ENCODE measurements at regions of chr17 and their contacts with region 1.

Region 1: DNA sequence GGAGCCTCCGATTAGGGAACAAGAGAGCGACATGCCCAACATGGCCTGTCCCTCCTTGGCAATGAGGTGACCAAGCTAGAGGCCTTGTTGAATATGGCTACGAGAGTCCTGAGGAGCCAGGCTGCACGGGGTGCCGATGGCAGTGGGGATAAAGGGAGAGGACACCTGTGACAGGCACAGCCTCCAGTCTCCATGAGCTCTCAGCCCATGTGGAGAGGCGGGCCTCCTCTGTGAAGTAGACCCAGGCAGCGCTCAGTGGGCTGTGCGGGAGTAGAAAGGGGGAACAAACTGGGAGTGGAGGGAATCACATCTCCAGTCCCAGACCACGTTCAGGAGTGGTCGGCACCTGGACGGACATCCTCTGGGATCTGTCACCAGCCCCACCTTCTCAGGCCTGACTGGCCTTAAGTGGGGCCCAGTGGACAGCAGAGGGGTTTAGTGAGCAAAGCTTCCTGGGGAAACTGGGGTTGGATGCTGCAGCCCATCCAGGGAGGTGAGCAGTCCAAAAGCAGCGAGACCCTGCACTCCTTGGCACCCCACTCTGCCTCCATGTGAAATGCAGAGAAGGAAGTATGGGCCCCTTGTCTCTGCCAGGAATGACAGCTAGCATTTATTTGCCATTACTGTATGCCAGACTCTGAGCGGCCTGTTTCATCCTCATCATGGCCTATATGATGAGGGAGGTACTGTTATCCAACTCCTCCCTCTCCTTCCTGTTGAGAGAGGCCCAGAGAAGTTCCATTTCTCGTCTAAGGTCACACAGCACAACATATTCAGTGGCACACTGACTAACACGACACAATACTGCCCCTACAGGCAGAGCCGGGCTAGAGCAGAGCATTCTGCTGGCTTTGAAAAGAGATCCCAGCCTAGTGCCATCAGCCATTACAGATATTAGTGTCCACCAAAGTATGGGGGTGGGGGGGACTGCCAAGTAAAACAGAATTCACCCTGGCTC is 4.5 kb upstream of the TMEM92 start:
- DNase-seq: peak; percentile 80 to 86
- H3K4me3 ChIP-seq: no peak overlapping the region
- H3K4me3 Mint-ChIP-seq: no peak overlapping the region
- H3K27ac Mint-ChIP-seq: no peak overlapping the region
- H3K4me1 ChIP-seq: peaks cover 22% of the 10 kb centered on the region
- H3K4me1 Mint-ChIP-seq: peaks cover 14% of the 10 kb centered on the region
- H3K27me3 ChIP-seq: no peaks in the 10 kb centered on the region
- H3K27me3 Mint-ChIP-seq: no peaks in the 10 kb centered on the region
- CTCF ChIP-seq: peak; percentile 92 to 98

Region 2: GRCh38 chr17:50289991-50290702 is 20.4 kb after region 1 on chr17:
- CTCF ChIA-PET with region 1: interaction called, 15 read pairs
- POLR2A ChIA-PET with region 1: interaction called, 4 read pairs
- intact Hi-C with region 1: no loop called
- DNase-seq: peak in 1 of 2 experiments; percentile 43
- H3K4me3 ChIP-seq: no peak overlapping the region
- H3K4me3 Mint-ChIP-seq: no peak overlapping the region
- H3K27ac Mint-ChIP-seq: no peak overlapping the region
- H3K4me1 ChIP-seq: peaks cover 11% of the 10 kb centered on the region
- H3K4me1 Mint-ChIP-seq: peaks cover 8% of the 10 kb centered on the region
- H3K27me3 ChIP-seq: no peaks in the 10 kb centered on the region
- H3K27me3 Mint-ChIP-seq: no peaks in the 10 kb centered on the region
- CTCF ChIP-seq: no peak